Astrocyte of the cerebellum (primary cell): ENCODE measurements at regions of chr10 and their contacts with region 1.

Region 1: DNA sequence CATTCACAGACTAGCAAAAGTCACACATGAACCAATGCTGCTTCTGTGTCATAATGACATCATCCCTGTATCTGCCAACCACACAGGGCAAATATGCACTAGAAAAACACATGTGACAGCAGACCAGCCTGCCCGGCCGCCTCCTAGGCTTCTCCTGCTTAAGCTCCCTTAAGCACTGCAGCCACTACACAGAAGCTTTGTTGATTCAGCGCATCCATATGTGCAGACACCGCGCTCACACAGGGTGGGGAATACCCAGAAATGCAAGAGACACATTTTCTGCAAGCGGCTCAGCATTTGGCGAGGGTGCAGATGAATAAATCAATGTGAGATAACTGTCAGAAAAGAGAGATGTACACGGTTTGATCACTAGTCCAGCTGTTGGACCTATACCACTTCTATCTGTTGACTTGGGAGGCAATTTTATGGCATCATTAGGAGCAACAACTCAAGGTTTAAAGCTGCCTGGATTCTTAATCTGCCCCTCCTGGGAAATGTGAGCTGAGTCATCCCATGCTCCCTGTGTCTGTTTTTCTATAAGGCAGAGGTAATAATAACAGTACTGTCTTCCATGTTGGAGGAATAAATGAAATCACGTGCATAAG is 33.4 kb downstream of the CPXM2 start:
- DNase-seq: no peak
- H3K4me3 ChIP-seq: no peak overlapping the region
- CTCF ChIP-seq: no peak

Region 2: DNA sequence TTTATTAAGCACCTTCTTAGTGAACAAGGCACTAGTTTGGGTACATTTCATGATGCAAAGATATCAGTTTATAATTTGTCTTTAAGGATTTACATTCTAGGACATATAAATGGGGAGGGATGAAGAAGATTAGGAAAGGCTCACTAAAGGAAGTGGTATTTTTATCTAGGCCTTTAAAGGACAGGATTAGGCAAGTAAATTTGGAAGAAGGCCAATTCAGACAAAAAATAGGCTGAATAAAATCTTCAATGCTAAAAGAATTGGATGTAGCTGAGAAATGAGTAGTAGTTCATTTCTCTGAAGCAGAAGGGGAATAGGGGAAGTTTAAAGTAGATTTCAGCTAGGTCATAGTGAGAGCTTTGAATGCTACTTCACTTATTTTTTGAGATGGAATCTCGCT is 974.0 kb before region 1 on chr10:
- in situ Hi-C with region 1: no loop called
- DNase-seq: no peak
- H3K4me3 ChIP-seq: no peak overlapping the region
- CTCF ChIP-seq: no peak

Region 3: GRCh38 chr10:123772645-123773508 is 85.3 kb before region 1 on chr10:
- in situ Hi-C with region 1: no loop called
- DNase-seq: no peak
- H3K4me3 ChIP-seq: no peak overlapping the region
- CTCF ChIP-seq: no peak

Region 4: DNA sequence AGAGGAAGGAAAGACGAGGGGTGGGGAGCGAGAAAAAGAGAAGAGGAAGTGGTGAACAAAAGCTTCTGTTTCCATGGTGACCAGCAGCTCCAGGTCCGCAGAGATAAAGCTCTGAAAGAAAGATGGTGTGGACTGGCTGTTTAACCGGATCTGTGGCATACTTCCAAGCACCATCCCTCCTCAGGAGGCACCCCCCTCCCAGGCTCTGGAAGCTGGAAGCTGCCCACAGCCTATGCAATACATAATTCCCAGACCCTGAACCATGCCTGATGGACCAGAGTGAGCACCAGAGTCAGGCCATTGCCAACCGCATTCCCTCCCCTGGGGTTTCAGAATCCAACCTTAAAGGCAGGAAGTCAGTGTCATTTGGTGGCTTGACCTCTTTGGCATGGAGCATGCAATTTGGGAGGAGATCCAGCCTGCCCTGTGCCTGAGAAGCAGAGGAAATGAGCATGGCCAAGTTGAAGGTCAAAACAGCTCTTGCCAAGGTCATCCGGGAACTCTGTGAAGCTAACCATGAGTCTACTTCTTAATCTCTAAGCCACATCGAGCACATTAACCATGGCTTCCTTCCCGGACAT is 55.6 kb after region 1 on chr10:
- in situ Hi-C with region 1: loop called (anchors 5 kb)
- DNase-seq: peak; percentile 13
- H3K4me3 ChIP-seq: no peak overlapping the region
- CTCF ChIP-seq: no peak

Region 5: GRCh38 chr10:123945325-123945920 is 87.2 kb after region 1 on chr10:
- in situ Hi-C with region 1: no loop called
- DNase-seq: no peak
- H3K4me3 ChIP-seq: no peak overlapping the region
- CTCF ChIP-seq: no peak